ENCODE measurements at regions of chr9 and their contacts with region 1.

Region 1: GRCh38 chr9:121679901-121680635 is 28.6 kb downstream of the DAB2IP start:
- DNase-seq: no peak
- H3K4me3 ChIP-seq: no peak overlapping the region
- H3K27ac ChIP-seq: no peak overlapping the region
- H3K4me1 ChIP-seq: peaks cover 0 to 5% (median 0%) of the 10 kb centered on the region in 4 experiments
- H3K27me3 ChIP-seq: no peaks in the 10 kb centered on the region

Region 2: GRCh38 chr9:121658166-121658565 is 21.9 kb before region 1 on chr9:
- CTCF ChIA-PET with region 1: interaction called, 38 read pairs
- POLR2A ChIA-PET with region 1: no interaction called
- DNase-seq: no peak
- H3K4me3 ChIP-seq: no peak overlapping the region
- H3K27ac ChIP-seq: no peak overlapping the region
- H3K4me1 ChIP-seq: no peaks in the 10 kb centered on the region
- H3K27me3 ChIP-seq: peaks cover 0 to 24% (median 4%) of the 10 kb centered on the region in 5 experiments

Region 3: DNA sequence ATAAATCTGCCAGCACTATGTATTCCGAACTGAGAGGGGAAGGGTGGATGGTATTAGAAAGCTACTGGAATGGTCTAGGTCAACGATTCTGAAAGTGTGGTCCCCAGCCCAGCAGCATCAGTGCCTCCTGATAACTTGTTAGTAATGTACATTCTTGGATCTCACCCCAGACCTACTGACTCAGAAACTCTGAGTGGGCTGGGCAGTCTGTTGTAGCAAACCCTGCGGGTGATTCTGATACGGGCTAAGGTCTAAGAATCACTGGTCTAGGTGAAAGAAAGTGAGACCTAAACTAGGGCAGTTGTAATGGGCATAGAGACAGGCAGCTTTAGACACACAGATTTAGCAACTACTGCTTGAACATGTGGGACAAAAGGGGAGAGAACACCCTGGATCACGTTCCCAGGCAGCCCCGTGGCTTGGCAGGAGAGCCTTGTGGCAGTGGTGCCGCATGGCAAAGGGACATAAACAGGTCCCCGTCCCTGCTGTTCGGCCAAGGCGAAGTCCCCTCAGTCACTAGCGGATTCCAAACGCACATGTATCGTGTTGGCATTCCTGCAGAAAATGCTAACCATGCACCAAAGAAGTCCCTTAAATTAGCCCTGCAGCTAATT is 196.7 kb after region 1 on chr9:
- CTCF ChIA-PET with region 1: no interaction called
- POLR2A ChIA-PET with region 1: no interaction called
- DNase-seq: no peak
- H3K4me3 ChIP-seq: no peak overlapping the region
- H3K27ac ChIP-seq: no peak overlapping the region
- H3K4me1 ChIP-seq: no peaks in the 10 kb centered on the region
- H3K27me3 ChIP-seq: no peaks in the 10 kb centered on the region

Region 4: DNA sequence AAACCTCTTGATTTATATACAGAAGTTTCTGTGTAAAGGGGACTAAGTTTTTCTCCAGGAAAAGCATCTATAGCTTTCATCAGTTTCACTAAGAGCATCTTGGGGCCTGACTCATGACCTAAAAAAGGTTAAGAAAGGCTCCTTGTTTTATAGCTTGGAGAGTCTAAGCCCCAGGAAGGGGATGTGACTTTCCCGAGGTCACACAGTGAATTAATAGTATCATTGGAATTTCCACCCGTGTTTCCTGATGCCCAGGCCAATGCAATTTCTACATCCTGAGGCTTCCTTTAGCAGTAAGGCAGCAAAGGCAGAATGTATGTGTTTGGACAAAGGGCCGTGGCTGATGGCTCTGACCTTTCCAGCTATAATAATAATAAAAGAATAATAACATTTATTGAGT is 488.3 kb after region 1 on chr9:
- CTCF ChIA-PET with region 1: no interaction called
- POLR2A ChIA-PET with region 1: no interaction called
- DNase-seq: no peak
- H3K4me3 ChIP-seq: no peak overlapping the region
- H3K27ac ChIP-seq: no peak overlapping the region
- H3K4me1 ChIP-seq: peaks cover 0 to 5% (median 0%) of the 10 kb centered on the region in 4 experiments
- H3K27me3 ChIP-seq: no peaks in the 10 kb centered on the region